Naive thymus-derived CD4-positive, alpha-beta T cell (primary cell): ENCODE measurements at regions of chr9 and their contacts with region 1.

Region 1: GRCh38 chr9:95875305-95876137 is at the start of gene ERCC6L2:
- DNase-seq: peak; percentile 87 to 94 (median 90)
- ATAC-seq: peak; percentile 93
- H3K4me3 ChIP-seq: no peak within 1 kb of the TSS
- H3K4me3 Mint-ChIP-seq: no peak within 1 kb of the TSS
- H3K27ac ChIP-seq: no peak within 1 kb of the TSS
- H3K27ac Mint-ChIP-seq: no peak within 1 kb of the TSS
- H3K4me1 ChIP-seq: peaks cover 8 to 20% of the 10 kb centered on the region in 2 donors
- H3K4me1 Mint-ChIP-seq: peaks cover 17 to 44% (median 35%) of the 10 kb centered on the region in 7 donors
- H3K27me3 ChIP-seq: no peaks in the 10 kb centered on the region
- H3K27me3 Mint-ChIP-seq: no peaks in the 10 kb centered on the region
- total RNA-seq, gene ERCC6L2: 46.2 to 82.8 (median 52.4) TPM

Region 2: DNA sequence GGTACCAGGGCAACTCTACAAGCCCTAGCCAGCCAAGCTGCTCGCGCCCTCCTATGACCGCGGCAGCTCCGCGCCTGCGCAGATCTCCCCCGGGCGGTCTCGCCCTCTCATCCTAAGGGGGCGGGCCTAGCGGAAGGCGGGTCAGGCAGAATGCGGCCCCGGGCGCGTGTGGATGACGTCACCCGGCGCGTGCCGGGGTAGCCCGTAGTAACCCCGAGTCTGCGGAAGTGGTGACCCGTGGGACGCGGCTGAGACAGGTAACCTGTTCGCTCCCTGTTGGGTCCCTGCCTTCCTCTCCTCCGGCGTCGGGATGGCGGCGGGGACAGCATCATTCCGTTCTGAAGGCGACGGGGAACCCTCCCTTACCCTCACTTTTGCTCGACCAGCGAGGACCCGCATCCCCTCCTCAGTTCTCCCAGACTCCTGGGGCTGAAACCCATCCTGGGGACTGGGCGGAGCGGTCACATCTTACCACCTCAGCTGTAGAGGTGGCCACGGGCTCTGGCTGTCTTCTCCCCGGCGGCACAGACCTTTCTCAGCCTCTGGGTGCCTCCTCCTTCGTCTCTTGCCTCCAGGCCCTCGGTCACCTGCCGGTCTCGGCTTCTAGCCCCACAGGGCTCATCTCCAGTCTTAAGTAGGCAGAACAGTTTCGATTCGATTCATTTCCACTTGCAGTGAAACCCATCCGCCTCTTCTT is 1148.9 kb before region 1 on chr9 and contains the start of gene AOPEP:
- CTCF ChIA-PET with region 1: no interaction called
- POLR2A ChIA-PET with region 1: no interaction called
- intact Hi-C with region 1: loop called in 1 of 2 experiments (anchors 5 kb)
- DNase-seq: peak; percentile 98 to 100 (median 99)
- ATAC-seq: peak; percentile 99
- H3K4me3 ChIP-seq: peak within 1 kb of the TSS; percentile 92
- H3K4me3 Mint-ChIP-seq: peak within 1 kb of the TSS; percentile 88 to 100 (median 98)
- H3K27ac ChIP-seq: peak within 1 kb of the TSS; percentile 82
- H3K27ac Mint-ChIP-seq: peak within 1 kb of the TSS; percentile 92 to 100 (median 98)
- H3K4me1 ChIP-seq: peaks cover 7% of the 10 kb centered on the region in 2 donors
- H3K4me1 Mint-ChIP-seq: peaks cover 7 to 24% (median 19%) of the 10 kb centered on the region in 7 donors
- H3K27me3 ChIP-seq: no peaks in the 10 kb centered on the region
- H3K27me3 Mint-ChIP-seq: peaks cover 0 to 2% (median 0%) of the 10 kb centered on the region in 5 donors
- total RNA-seq, gene AOPEP: 11.0 to 19.0 (median 14.9) TPM

Region 3: DNA sequence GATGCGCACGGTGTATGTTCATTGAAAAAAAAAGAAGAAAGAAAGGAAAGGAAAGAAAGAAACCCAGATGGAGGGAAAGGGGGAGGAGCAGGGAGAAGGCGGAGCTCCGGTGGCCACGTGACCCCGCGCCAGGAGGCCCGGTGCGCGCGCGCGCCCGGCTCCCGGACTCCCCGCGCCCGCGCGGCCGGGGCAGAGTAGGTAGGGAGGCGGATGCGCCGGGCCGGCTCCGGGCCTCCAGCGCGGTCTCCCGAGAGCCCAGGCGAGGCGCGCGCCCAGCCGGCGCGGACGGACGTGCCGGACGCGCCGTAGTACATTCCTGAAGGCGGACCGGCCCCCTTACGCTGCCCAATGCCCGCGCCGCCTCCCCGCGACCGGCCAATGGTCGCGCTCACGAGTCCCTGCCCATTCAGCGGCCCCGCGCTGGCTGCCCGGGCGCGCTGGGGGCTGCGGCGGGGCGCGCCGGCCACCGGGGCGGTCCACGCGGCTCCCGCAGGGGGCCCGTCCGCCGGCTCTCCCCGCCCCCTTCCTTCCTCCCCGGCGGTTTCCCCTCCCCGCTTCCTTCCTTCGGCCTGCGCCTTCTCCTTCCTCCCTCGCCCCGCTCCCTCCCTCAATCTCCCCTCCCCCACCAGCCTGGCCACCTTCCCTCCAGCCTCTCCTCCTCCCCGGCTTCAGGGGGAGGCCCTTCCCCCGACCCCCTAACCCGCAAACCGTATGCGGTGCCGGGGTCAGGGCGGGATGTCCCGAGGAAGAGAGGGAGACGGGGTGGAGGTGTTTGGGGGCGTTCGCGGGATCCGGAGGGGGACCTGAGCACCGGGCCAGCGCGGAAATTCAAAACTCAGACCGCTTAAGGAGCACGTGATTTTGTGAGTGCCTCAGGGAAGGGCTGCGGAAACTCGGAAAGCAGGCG is 364.6 kb before region 1 on chr9:
- CTCF ChIA-PET with region 1: no interaction called
- POLR2A ChIA-PET with region 1: interaction called, 4 read pairs
- intact Hi-C with region 1: loop called (anchors 1 kb)
- DNase-seq: peak; percentile 64 to 87 (median 80)
- ATAC-seq: peak; percentile 75
- H3K4me3 ChIP-seq: peak overlapping the region; percentile 66
- H3K4me3 Mint-ChIP-seq: peak overlapping the region; percentile 90 to 100 (median 96)
- H3K27ac ChIP-seq: peak overlapping the region; percentile 58
- H3K27ac Mint-ChIP-seq: peak overlapping the region; percentile 82 to 94 (median 85)
- H3K4me1 ChIP-seq: peaks cover 14 to 18% of the 10 kb centered on the region in 2 donors
- H3K4me1 Mint-ChIP-seq: peaks cover 26 to 45% (median 39%) of the 10 kb centered on the region in 7 donors
- H3K27me3 ChIP-seq: no peaks in the 10 kb centered on the region
- H3K27me3 Mint-ChIP-seq: peaks cover 0 to 79% (median 3%) of the 10 kb centered on the region in 5 donors

Region 4: GRCh38 chr9:95783426-95783975 is 92.0 kb before region 1 on chr9:
- CTCF ChIA-PET with region 1: no interaction called
- POLR2A ChIA-PET with region 1: no interaction called
- intact Hi-C with region 1: no loop called
- DNase-seq: no peak
- ATAC-seq: no peak
- H3K4me3 ChIP-seq: no peak overlapping the region
- H3K4me3 Mint-ChIP-seq: no peak overlapping the region
- H3K27ac ChIP-seq: no peak overlapping the region
- H3K27ac Mint-ChIP-seq: no peak overlapping the region
- H3K4me1 ChIP-seq: no peaks in the 10 kb centered on the region
- H3K4me1 Mint-ChIP-seq: peaks cover 0 to 9% (median 0%) of the 10 kb centered on the region in 7 donors
- H3K27me3 ChIP-seq: no peaks in the 10 kb centered on the region
- H3K27me3 Mint-ChIP-seq: peaks cover 0 to 20% (median 0%) of the 10 kb centered on the region in 5 donors

Region 5: DNA sequence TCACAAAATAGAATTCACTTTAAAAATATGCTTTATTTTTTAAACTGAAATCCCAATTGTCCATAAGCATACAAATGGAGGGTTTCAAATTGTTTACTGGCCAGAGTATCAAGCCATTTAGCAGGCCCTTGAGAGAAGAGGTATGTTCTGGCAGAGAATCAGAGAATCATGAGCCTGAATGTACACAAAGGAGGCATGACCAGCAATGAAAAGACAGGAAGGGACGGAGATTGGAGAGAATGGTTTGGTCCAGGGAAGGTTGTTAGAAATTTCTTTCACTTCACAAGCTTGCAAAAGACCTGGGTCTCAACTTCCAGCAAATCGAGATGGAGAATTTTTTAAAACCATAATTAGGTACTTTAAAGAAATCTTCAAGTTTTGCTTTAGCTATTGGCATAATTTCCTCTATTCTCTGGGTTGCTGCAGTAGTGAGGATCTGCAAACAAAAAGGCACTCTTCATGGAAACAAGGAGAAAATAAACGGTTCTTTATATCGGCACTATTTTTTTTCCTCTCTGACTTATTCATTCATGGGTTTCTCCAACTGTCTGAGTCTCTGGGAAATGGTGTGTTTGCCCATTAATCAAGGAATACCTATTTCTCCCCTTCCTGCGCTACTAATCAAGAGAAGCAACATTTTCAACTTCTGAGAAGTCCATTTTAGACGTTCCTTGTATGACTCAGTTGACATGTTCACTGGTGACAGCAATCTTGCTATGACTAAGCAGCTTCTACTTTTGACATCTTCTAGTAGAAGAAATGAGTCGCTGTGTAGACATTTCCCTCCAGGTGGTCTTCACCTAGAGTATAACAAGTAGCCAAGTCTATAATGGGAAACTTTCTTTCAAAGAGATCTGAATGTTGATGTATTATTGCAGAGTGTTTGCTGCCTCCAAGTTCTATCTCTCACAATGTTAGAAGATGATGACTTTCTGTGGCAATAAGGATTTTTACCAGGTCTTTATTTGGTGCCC is 23.2 kb before region 1 on chr9:
- CTCF ChIA-PET with region 1: no interaction called
- POLR2A ChIA-PET with region 1: no interaction called
- intact Hi-C with region 1: loop called in 1 of 2 experiments (anchors 1 kb)
- DNase-seq: no peak
- ATAC-seq: no peak
- H3K4me3 ChIP-seq: no peak overlapping the region
- H3K4me3 Mint-ChIP-seq: peak overlapping the region in 1 of 10 donors; percentile 55
- H3K27ac ChIP-seq: no peak overlapping the region
- H3K27ac Mint-ChIP-seq: peak overlapping the region in 1 of 9 donors; percentile 54
- H3K4me1 ChIP-seq: no peaks in the 10 kb centered on the region
- H3K4me1 Mint-ChIP-seq: peaks cover 2 to 39% (median 11%) of the 10 kb centered on the region in 7 donors
- H3K27me3 ChIP-seq: no peaks in the 10 kb centered on the region
- H3K27me3 Mint-ChIP-seq: no peaks in the 10 kb centered on the region

Region 6: GRCh38 chr9:95927271-95928004 is 51.9 kb after region 1 on chr9:
- CTCF ChIA-PET with region 1: no interaction called
- POLR2A ChIA-PET with region 1: interaction called, 10 read pairs
- intact Hi-C with region 1: no loop called
- DNase-seq: no peak
- ATAC-seq: no peak
- H3K4me3 ChIP-seq: no peak overlapping the region
- H3K4me3 Mint-ChIP-seq: no peak overlapping the region
- H3K27ac ChIP-seq: no peak overlapping the region
- H3K27ac Mint-ChIP-seq: peak overlapping the region in 2 of 9 donors; percentile 12 to 56
- H3K4me1 ChIP-seq: no peaks in the 10 kb centered on the region
- H3K4me1 Mint-ChIP-seq: peaks cover 0 to 10% (median 4%) of the 10 kb centered on the region in 7 donors
- H3K27me3 ChIP-seq: no peaks in the 10 kb centered on the region
- H3K27me3 Mint-ChIP-seq: no peaks in the 10 kb centered on the region

Region 7: GRCh38 chr9:96061293-96061987 is 185.9 kb after region 1 on chr9:
- CTCF ChIA-PET with region 1: no interaction called
- POLR2A ChIA-PET with region 1: no interaction called
- intact Hi-C with region 1: loop called in 1 of 2 experiments (anchors 1 kb)
- DNase-seq: peak in 8 of 9 donors; percentile 23 to 66 (median 50)
- ATAC-seq: peak; percentile 69
- H3K4me3 ChIP-seq: no peak overlapping the region
- H3K4me3 Mint-ChIP-seq: no peak overlapping the region
- H3K27ac ChIP-seq: no peak overlapping the region
- H3K27ac Mint-ChIP-seq: peak overlapping the region in 2 of 9 donors; percentile 63 to 73
- H3K4me1 ChIP-seq: no peaks in the 10 kb centered on the region
- H3K4me1 Mint-ChIP-seq: peaks cover 0 to 22% (median 6%) of the 10 kb centered on the region in 7 donors
- H3K27me3 ChIP-seq: no peaks in the 10 kb centered on the region
- H3K27me3 Mint-ChIP-seq: no peaks in the 10 kb centered on the region